ENCODE measurements at regions of chr9 and their contacts with region 1.

Region 1: GRCh38 chr9:121992571-121993212 is 100.4 kb downstream of the TTLL11 start:
- DNase-seq: peak; percentile 29
- H3K4me3 Mint-ChIP-seq: no peak overlapping the region
- H3K27ac Mint-ChIP-seq: no peak overlapping the region
- H3K4me1 Mint-ChIP-seq: no peaks in the 10 kb centered on the region
- H3K27me3 Mint-ChIP-seq: no peaks in the 10 kb centered on the region

Region 2: DNA sequence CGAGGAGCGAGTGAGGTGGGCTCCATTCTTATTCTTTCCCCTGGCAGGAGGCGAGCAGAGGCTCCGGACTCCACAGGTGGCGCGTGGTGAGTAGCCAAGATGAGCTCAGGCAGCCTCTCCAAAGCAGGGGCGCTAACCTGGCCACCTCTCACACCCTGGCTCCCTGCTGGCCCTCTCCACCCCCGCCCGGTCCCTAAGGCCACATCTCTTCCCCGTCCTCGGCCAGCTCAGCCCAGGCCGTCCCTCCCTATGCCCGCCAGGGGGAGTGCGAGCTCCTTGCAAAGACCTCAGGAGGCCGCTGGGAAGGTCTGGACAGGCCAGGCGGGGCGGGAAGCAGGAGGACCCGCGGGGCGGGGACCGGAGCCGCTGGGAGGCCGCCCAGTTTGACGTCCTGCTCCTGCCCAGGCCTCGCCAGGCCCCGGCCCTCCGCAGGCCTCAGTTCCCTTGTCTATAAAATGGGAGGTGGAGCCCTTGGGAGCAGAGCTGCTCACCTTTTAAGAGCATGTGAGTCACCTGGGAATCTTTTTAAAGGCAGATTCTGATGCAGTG is 446.7 kb before region 1 on chr9:
- intact Hi-C with region 1: loop called (anchors 2 kb)
- DNase-seq: peak; percentile 57
- H3K4me3 Mint-ChIP-seq: no peak overlapping the region
- H3K27ac Mint-ChIP-seq: no peak overlapping the region
- H3K4me1 Mint-ChIP-seq: no peaks in the 10 kb centered on the region
- H3K27me3 Mint-ChIP-seq: peaks cover 4% of the 10 kb centered on the region

Region 3: DNA sequence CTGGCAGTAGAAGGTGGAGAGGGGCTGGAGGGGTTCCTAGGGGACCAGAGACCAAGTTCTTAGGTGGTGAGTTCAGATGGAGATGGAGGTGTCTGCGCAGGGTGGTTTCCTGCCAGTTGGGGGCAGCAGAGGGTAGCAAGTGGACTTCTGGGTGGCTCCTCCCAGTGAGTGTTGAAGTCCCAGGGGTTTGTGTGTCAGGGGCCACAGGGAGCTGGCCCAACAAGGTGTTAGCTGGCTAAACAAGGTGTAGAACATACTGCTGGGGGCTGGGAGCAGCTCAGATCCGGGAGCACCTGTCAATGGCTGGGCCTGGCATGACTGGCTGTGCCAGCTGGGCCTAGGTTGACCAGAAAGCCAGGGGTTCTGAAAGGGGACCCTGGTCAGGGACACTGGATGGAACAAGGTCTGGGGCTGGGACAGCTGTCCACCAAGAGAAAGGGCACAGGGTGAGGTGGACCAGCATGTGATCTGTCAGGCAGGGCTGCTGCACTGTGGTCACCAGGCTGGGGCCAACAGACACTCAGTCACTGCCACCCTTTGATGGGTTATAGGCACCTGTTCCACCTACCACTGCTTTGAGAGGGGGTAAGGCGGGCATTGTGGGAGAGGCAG is 305.7 kb before region 1 on chr9:
- intact Hi-C with region 1: loop called (anchors 1 kb)
- DNase-seq: peak; percentile 50
- H3K4me3 Mint-ChIP-seq: no peak overlapping the region
- H3K27ac Mint-ChIP-seq: no peak overlapping the region
- H3K4me1 Mint-ChIP-seq: no peaks in the 10 kb centered on the region
- H3K27me3 Mint-ChIP-seq: peaks cover 6% of the 10 kb centered on the region

Region 4: GRCh38 chr9:121744002-121744686 is 248.5 kb before region 1 on chr9:
- intact Hi-C with region 1: loop called (anchors 2 kb)
- DNase-seq: peak; percentile 29
- H3K4me3 Mint-ChIP-seq: no peak overlapping the region
- H3K27ac Mint-ChIP-seq: no peak overlapping the region
- H3K4me1 Mint-ChIP-seq: peaks cover 3% of the 10 kb centered on the region
- H3K27me3 Mint-ChIP-seq: peaks cover 3% of the 10 kb centered on the region

Region 5: DNA sequence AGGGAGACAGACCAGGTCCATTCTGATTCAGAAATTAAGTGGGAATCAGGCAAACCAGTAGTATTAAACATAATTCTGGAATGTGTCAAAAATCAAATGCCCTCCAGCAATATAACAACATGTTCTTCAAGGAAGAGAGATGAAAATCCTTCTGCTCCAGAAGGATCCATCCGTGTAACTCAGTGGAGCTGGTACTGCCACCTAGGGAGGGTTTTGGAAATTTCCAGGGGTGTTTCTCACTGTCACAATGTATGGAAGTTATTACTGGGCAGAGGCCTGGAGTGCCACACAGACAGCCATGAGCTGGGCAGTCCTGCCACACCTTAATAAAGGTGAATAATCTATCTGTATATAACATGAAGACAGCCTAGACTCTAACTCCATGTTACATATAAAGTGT is 12.9 kb after region 1 on chr9:
- intact Hi-C with region 1: no loop called
- DNase-seq: no peak
- H3K4me3 Mint-ChIP-seq: no peak overlapping the region
- H3K27ac Mint-ChIP-seq: no peak overlapping the region
- H3K4me1 Mint-ChIP-seq: no peaks in the 10 kb centered on the region
- H3K27me3 Mint-ChIP-seq: peaks cover 2% of the 10 kb centered on the region

Region 6: GRCh38 chr9:122318284-122318683 is 325.6 kb after region 1 on chr9:
- intact Hi-C with region 1: no loop called
- DNase-seq: no peak
- H3K4me3 Mint-ChIP-seq: no peak overlapping the region
- H3K27ac Mint-ChIP-seq: no peak overlapping the region
- H3K4me1 Mint-ChIP-seq: no peaks in the 10 kb centered on the region
- H3K27me3 Mint-ChIP-seq: no peaks in the 10 kb centered on the region